Gastrocnemius medialis (tissue), 4 donors: ENCODE measurements at regions of chrX and their contacts with region 1.

Region 1: DNA sequence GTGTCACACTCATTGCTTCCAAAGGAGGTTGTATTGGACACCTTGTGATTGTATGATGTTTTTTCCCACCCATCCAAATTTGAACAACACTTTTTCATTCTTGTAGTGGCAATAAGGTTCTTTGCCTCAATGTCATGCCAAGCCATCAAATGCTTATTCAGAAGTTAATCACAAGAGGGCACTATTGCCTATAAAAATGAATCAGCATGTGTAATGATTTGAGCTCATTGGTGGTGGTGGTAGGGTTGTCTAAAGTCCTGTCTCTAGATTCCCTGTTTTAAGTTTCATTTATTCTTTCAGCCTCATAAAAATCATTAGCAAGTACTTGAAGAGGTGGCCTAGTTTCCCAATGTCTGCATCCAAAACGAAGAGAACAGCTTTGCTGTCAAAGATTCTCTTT is 37.0 kb downstream of the IRS4 start:
- DNase-seq: no peak
- ATAC-seq: no peak
- H3K4me3 ChIP-seq: no peak overlapping the region
- H3K27ac ChIP-seq: no peak overlapping the region
- H3K4me1 ChIP-seq: no peaks in the 10 kb centered on the region
- H3K27me3 ChIP-seq: no peaks in the 10 kb centered on the region
- CTCF ChIP-seq: no peak
- POLR2A ChIP-seq: no peak

Region 2: DNA sequence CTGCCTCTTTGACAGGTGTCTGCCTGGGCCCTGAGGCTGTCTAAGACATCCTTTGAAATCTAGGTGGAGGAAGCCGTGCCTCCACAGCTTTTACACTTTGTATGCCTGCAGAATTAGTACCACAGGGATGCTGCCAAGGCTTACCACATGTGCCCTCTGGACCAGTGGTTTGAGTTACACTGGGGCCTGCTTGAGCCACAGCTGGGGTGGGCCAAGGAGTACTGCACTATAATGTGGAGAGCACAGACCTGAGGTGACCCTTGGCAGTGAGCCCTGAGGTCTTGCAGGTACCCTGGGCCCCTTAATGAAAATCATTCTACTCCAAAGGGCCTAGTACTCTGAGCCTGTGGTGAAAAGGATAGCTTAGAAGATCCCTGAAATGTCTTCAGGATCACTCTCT is 64.2 kb after region 1 on chrX:
- in situ Hi-C with region 1: no loop called
- intact Hi-C with region 1: no loop called
- DNase-seq: no peak
- ATAC-seq: no peak
- H3K4me3 ChIP-seq: no peak overlapping the region
- H3K27ac ChIP-seq: no peak overlapping the region
- H3K4me1 ChIP-seq: no peaks in the 10 kb centered on the region
- H3K27me3 ChIP-seq: no peaks in the 10 kb centered on the region
- CTCF ChIP-seq: no peak
- POLR2A ChIP-seq: no peak

Region 3: GRCh38 chrX:109472939-109473735 is 773.8 kb after region 1 on chrX:
- in situ Hi-C with region 1: no loop called
- intact Hi-C with region 1: loop called (anchors 5 kb)
- DNase-seq: no peak
- ATAC-seq: no peak
- H3K4me3 ChIP-seq: no peak overlapping the region
- H3K27ac ChIP-seq: no peak overlapping the region
- H3K4me1 ChIP-seq: no peaks in the 10 kb centered on the region
- H3K27me3 ChIP-seq: peaks cover 0 to 13% (median 0%) of the 10 kb centered on the region in 3 donors
- CTCF ChIP-seq: no peak
- POLR2A ChIP-seq: no peak